ENCODE measurements at regions of chr11 and their contacts with region 1.

Region 1: GRCh38 chr11:60951899-60952741 is at the start of gene SLC15A3:
- DNase-seq: peak; percentile 95 to 98 (median 95)
- H3K4me3 ChIP-seq: peak within 1 kb of the TSS; percentile 74 to 94 (median 82)
- H3K4me3 Mint-ChIP-seq: peak within 1 kb of the TSS; percentile 95 to 96
- H3K27ac ChIP-seq: peak within 1 kb of the TSS; percentile 99 to 100
- H3K27ac Mint-ChIP-seq: peak within 1 kb of the TSS; percentile 99 to 100 (median 100)
- H3K4me1 ChIP-seq: peaks cover 69 to 85% of the 10 kb centered on the region in 2 donors
- H3K4me1 Mint-ChIP-seq: peaks cover 73% of the 10 kb centered on the region
- H3K27me3 ChIP-seq: no peaks in the 10 kb centered on the region
- H3K27me3 Mint-ChIP-seq: peaks cover 9 to 17% (median 15%) of the 10 kb centered on the region in 3 donors
- CTCF ChIP-seq: no peak
- polyA plus RNA-seq, gene SLC15A3: 27.1 to 121 (median 35.0) TPM

Region 2: DNA sequence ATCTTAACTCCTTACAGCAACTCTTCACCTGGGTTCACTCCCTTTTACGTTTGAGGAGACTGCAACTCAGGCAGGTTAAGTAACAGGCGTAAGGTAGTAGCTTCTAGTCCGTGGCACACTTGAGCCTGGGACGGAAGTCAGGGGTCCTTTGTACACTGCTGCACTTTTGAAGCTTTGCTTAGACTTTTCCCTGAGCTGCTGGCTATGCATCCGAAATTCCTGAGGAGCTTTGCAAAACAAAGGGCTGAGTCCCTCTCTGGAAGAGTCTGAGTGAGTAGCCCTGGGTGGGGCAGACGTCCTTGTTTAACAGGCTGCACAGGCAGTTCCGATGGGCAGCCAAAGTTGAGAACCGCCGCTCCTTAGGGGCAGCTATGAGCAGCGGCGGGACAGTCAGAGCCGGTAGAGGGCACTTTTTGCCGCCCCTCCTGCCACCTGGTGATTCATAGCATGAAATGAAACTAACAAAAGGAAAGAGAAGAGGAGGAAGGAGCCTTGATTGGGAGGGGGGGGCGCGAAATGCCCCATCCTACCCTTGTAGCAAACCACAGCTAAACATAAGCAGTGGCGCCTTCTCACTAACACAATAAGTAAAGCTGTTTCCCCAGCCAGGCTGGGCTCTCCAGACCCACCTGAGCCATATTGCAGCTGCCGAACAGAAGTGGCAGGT is 36.7 kb before region 1 on chr11:
- intact Hi-C with region 1: loop called in 1 of 2 experiments (anchors 5 kb)
- DNase-seq: peak; percentile 62 to 85 (median 81)
- H3K4me3 ChIP-seq: peak overlapping the region; percentile 78 to 93 (median 83)
- H3K4me3 Mint-ChIP-seq: peak overlapping the region; percentile 99 to 100
- H3K27ac ChIP-seq: peak overlapping the region; percentile 44 to 45
- H3K27ac Mint-ChIP-seq: peak overlapping the region; percentile 68 to 83 (median 76)
- H3K4me1 ChIP-seq: peaks cover 79% of the 10 kb centered on the region in 2 donors
- H3K4me1 Mint-ChIP-seq: peaks cover 78% of the 10 kb centered on the region
- H3K27me3 ChIP-seq: no peaks in the 10 kb centered on the region
- H3K27me3 Mint-ChIP-seq: peaks cover 0 to 3% (median 0%) of the 10 kb centered on the region in 3 donors
- CTCF ChIP-seq: peak; percentile 34

Region 3: GRCh38 chr11:61028272-61028761 is 76.2 kb after region 1 on chr11:
- intact Hi-C with region 1: loop called in 1 of 2 experiments (anchors 2 kb)
- DNase-seq: peak; percentile 70 to 88 (median 81)
- H3K4me3 ChIP-seq: no peak overlapping the region
- H3K4me3 Mint-ChIP-seq: peak overlapping the region; percentile 6 to 53
- H3K27ac ChIP-seq: peak overlapping the region in 1 of 2 donors; percentile 45
- H3K27ac Mint-ChIP-seq: peak overlapping the region; percentile 22 to 91 (median 85)
- H3K4me1 ChIP-seq: peaks cover 43 to 47% of the 10 kb centered on the region in 2 donors
- H3K4me1 Mint-ChIP-seq: peaks cover 49% of the 10 kb centered on the region
- H3K27me3 ChIP-seq: peaks cover 0 to 4% of the 10 kb centered on the region in 2 donors
- H3K27me3 Mint-ChIP-seq: peaks cover 10 to 27% (median 14%) of the 10 kb centered on the region in 3 donors
- CTCF ChIP-seq: no peak

Region 4: GRCh38 chr11:61061081-61061826 is 109.1 kb after region 1 on chr11:
- intact Hi-C with region 1: loop called in 1 of 2 experiments (anchors 5 kb)
- DNase-seq: peak; percentile 91 to 99 (median 93)
- H3K4me3 ChIP-seq: peak overlapping the region in 1 of 3 experiments; percentile 2
- H3K4me3 Mint-ChIP-seq: peak overlapping the region; percentile 34 to 72
- H3K27ac ChIP-seq: peak overlapping the region; percentile 60 to 69
- H3K27ac Mint-ChIP-seq: peak overlapping the region; percentile 89 to 96 (median 94)
- H3K4me1 ChIP-seq: peaks cover 32 to 34% of the 10 kb centered on the region in 2 donors
- H3K4me1 Mint-ChIP-seq: peaks cover 42% of the 10 kb centered on the region
- H3K27me3 ChIP-seq: no peaks in the 10 kb centered on the region
- H3K27me3 Mint-ChIP-seq: peaks cover 3 to 11% (median 4%) of the 10 kb centered on the region in 3 donors
- CTCF ChIP-seq: no peak